ENCODE measurements at regions of chr1 and their contacts with region 1.

Region 1: GRCh38 chr1:97726383-97726782 is 194.5 kb downstream of the DPYD start:
- DNase-seq: no peak
- ATAC-seq: no peak
- H3K4me3 ChIP-seq: no peak overlapping the region
- H3K27ac ChIP-seq: no peak overlapping the region
- H3K4me1 ChIP-seq: no peaks in the 10 kb centered on the region
- H3K27me3 ChIP-seq: no peaks in the 10 kb centered on the region
- CTCF ChIP-seq: no peak
- EP300 ChIP-seq: no peak
- POLR2A ChIP-seq: no peak
- RAD21 ChIP-seq: no peak

Region 2: DNA sequence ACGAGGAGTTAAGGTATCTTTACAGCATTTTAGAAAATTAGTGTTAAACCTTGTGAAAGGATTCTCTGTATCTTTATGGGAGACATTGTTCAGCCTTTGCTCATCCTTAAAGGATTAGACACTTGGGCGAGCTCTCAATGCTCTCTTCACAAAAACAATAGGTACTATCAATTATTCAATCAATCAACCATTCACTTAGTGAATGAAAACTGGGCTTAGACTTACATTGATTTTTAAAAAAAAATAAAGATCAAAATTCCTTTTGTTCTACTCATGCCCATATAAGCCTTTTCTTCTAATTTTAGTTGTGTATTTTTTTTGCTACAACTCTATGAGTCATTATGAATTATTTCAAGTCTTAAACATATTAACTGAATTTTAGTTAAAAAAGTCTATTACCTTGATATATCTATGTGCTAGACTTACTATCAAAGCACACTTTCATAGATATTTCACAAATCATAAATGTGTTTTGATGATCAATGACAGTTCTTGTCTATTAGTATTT is 13.3 kb after region 1 on chr1:
- CTCF ChIA-PET with region 1: interaction called, 5 read pairs
- POLR2A ChIA-PET with region 1: no interaction called
- RAD21 ChIA-PET with region 1: no interaction called
- SMC1A ChIA-PET with region 1: interaction called, 13 read pairs
- in situ Hi-C with region 1: no loop called
- intact Hi-C with region 1: no loop called
- DNase-seq: no peak
- ATAC-seq: no peak
- H3K4me3 ChIP-seq: no peak overlapping the region
- H3K27ac ChIP-seq: no peak overlapping the region
- H3K4me1 ChIP-seq: no peaks in the 10 kb centered on the region
- H3K27me3 ChIP-seq: no peaks in the 10 kb centered on the region
- CTCF ChIP-seq: no peak
- EP300 ChIP-seq: no peak
- POLR2A ChIP-seq: no peak
- RAD21 ChIP-seq: no peak

Region 3: GRCh38 chr1:97827887-97828286 is 101.5 kb after region 1 on chr1:
- CTCF ChIA-PET with region 1: no interaction called
- POLR2A ChIA-PET with region 1: no interaction called
- RAD21 ChIA-PET with region 1: no interaction called
- SMC1A ChIA-PET with region 1: no interaction called
- in situ Hi-C with region 1: no loop called
- intact Hi-C with region 1: no loop called
- DNase-seq: no peak
- ATAC-seq: peak; percentile 92
- H3K4me3 ChIP-seq: no peak overlapping the region
- H3K27ac ChIP-seq: no peak overlapping the region
- H3K4me1 ChIP-seq: no peaks in the 10 kb centered on the region
- H3K27me3 ChIP-seq: no peaks in the 10 kb centered on the region
- CTCF ChIP-seq: no peak
- EP300 ChIP-seq: no peak
- POLR2A ChIP-seq: no peak
- RAD21 ChIP-seq: no peak

Measured in GM12878 (cell line).